Activated CD4-positive, alpha-beta memory T cell treated with anti-CD3 and anti-CD28 coated beads for 36 hours (primary cell): ENCODE measurements at regions of chr11 and their contacts with region 1.

Region 1: DNA sequence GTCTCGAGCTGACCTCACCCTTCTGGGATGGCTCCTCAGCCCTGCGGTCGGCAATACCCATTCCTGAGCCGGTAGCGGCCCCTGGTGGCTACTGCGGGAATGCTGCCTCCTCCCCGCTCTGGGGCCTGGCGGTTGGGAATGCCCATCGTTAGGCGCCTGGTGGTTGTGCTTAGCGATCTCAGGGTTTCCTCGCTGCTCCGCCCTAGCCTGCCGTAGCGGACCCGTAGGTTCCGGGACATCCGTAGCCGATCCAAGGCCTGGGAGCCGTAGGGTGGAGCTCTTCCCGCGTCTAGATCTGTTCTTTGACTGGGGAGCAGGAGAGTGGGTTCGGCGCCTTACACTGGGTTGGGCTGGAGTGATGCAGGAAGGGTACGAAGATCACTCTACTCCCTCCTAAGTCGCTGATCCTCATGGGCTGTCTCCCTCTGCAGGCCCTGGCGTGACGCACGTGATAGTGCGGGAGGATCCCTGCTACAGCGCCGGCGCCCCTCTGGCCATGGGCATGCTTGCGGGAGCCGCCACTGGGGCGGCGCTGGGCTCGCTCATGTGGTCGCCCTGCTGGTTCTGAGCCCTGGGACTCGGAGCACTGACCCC is 14.8 kb downstream of the PLEKHB1 start:
- DNase-seq: peak; percentile 90
- H3K4me3 Mint-ChIP-seq: peak overlapping the region; percentile 37
- H3K27ac Mint-ChIP-seq: no peak overlapping the region
- H3K4me1 Mint-ChIP-seq: peaks cover 3% of the 10 kb centered on the region
- H3K27me3 Mint-ChIP-seq: no peaks in the 10 kb centered on the region

Region 2: DNA sequence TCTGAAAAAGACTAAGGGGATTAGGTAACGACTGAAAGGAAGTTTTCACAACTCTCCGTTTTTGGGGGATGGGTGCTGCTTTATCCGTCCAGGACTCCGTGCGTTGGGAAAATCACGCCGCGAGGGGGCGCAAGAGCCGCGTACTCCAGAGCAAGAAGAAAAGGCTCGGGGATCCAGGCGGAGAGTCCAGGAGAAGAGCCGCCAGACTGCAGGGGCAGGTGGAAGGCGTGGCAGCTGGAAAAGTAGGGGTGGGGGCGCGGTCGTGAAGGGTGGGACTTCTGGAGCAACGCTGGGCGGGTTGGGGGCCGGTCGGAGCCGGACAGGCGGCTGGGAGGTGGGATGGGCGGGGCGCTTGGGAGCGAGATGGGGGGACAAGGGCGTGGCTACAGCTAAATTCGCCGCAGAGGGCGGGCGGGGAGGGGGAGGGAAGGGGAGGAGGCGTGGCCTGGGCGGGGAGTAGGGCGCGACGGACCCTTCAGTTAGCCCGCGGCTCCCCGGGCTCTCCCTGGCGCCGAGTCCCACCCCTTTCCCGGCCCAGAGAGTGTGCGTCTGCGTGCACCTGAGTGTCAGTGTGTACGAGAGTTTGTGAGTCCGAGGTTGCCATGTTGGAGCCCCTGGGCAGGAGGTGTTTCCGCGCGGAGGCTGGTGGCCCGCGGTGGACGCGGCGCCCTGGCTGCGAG is 353.7 kb before region 1 on chr11:
- CTCF ChIA-PET with region 1: interaction called, 19 read pairs
- POLR2A ChIA-PET with region 1: no interaction called
- intact Hi-C with region 1: no loop called
- DNase-seq: peak; percentile 93
- H3K4me3 Mint-ChIP-seq: peak overlapping the region; percentile 74
- H3K27ac Mint-ChIP-seq: no peak overlapping the region
- H3K4me1 Mint-ChIP-seq: peaks cover 6% of the 10 kb centered on the region
- H3K27me3 Mint-ChIP-seq: peaks cover 8% of the 10 kb centered on the region

Region 3: DNA sequence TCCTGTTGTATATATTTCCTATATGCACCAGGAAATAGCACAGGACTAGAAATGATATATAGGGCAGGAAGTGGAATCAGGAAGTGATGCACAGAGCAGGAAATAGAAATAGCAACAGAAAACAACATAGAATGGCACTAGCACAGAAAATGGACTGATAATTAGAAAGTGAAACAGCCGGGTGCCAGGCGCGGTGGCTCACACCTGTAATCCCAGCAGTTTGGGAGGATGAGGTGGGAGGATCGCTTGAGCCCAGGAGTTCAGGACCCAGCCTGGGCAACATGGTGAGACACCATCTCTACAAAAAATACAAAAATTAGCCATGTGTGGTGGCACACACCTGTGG is 294.9 kb before region 1 on chr11:
- CTCF ChIA-PET with region 1: no interaction called
- POLR2A ChIA-PET with region 1: no interaction called
- intact Hi-C with region 1: no loop called
- DNase-seq: peak; percentile 37
- H3K4me3 Mint-ChIP-seq: peak overlapping the region; percentile 13
- H3K27ac Mint-ChIP-seq: peak overlapping the region; percentile 34
- H3K4me1 Mint-ChIP-seq: peaks cover 22% of the 10 kb centered on the region
- H3K27me3 Mint-ChIP-seq: no peaks in the 10 kb centered on the region

Region 4: DNA sequence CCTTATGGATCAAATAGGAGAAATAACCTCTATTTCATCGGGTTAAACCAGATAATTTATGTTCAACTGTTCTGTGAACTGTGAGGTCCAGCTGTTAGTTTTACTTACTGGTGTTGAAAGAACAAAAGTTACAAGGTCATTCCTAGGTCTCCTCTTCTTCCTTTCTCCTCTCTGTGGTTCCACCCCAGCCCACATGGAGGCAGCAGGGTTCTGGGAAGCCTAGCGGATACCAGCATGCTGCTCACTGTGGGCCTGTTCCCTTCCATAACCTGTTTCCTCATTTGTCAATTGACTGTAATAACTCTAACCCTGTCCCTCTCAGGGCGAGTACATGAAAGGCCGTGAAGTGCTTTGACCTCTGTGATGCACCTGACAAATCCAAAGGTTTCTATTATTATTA is 257.1 kb before region 1 on chr11:
- CTCF ChIA-PET with region 1: interaction called, 11 read pairs
- POLR2A ChIA-PET with region 1: no interaction called
- intact Hi-C with region 1: no loop called
- DNase-seq: peak; percentile 34
- H3K4me3 Mint-ChIP-seq: no peak overlapping the region
- H3K27ac Mint-ChIP-seq: no peak overlapping the region
- H3K4me1 Mint-ChIP-seq: no peaks in the 10 kb centered on the region
- H3K27me3 Mint-ChIP-seq: no peaks in the 10 kb centered on the region

Region 5: DNA sequence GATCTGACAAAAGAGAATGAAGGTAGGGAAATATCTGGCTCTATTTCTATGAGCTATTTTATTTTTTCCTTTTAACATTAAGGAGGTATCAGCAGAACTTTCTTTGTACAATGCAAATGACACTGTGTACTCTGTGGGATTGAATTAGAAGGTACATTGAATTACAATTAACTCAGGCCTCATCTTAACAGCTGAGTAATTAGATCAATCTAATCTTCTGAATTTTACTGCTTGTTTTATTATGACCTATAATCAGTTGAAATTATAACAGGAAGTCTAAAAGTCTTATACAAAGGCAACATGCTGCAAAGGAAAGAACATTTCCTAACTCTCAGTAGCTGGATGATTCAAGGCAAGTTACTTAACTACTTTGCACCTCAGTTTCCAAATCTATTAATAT is 215.2 kb before region 1 on chr11:
- CTCF ChIA-PET with region 1: no interaction called
- POLR2A ChIA-PET with region 1: no interaction called
- intact Hi-C with region 1: no loop called
- DNase-seq: no peak
- H3K4me3 Mint-ChIP-seq: no peak overlapping the region
- H3K27ac Mint-ChIP-seq: no peak overlapping the region
- H3K4me1 Mint-ChIP-seq: peaks cover 6% of the 10 kb centered on the region
- H3K27me3 Mint-ChIP-seq: no peaks in the 10 kb centered on the region

Region 6: DNA sequence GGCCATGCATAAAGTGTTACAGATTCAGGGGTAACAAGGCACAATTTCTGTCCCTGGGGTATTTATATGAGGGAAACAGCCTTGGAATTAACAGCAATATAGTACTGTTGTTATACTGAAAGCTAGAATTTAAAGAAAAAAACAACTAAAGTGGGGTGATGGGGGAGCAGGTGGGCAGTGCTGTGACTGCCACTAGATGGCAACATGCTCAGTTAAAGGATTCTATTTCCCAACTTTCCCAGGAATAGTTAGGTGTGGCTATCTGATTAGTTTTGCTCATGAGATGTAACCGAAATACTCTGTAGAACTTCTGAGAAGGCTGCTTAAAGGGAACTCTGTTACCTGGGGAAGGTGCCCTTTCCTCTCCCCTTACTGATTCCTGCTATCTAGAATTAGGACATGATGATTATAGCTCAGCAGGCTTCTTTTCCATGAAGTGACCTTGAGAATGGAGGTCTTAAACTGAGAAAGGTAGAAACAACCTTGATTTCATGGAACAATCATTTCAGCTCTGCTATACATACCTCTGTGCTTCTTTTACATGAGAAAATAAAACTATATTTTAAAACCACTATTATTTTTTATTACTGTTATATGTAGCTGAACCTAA is 182.3 kb before region 1 on chr11:
- CTCF ChIA-PET with region 1: interaction called, 15 read pairs
- POLR2A ChIA-PET with region 1: no interaction called
- intact Hi-C with region 1: no loop called
- DNase-seq: no peak
- H3K4me3 Mint-ChIP-seq: no peak overlapping the region
- H3K27ac Mint-ChIP-seq: no peak overlapping the region
- H3K4me1 Mint-ChIP-seq: no peaks in the 10 kb centered on the region
- H3K27me3 Mint-ChIP-seq: no peaks in the 10 kb centered on the region

Region 7: DNA sequence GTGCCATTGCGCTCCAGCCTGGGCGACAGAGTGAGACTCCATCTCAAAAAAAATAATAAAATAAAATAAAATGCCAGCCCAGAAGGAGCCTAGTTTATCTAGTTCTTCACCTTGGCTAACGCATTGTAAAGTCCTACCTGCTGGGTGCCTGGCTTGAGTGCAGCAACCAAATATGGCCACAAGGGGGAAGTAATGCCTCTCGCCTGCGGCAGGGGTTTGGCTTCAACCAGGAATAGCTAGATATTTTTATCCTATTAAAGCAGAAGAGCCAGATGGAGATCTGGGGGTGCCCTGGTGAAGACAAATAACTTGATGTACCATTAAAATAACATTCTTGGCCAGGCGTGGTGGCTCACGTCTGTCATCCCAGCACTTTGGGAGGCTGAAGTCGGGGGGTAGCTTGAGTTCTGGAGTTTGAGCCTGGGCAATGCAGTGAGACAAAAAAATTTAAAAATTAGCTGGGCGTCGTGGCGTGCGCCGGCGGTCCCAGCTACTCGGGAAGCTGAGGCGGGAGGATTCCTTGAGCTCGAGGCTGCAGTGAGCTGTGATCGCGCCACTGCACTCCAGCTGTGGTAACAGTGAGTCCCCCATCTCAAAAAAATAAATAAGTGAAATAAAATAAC is 35.3 kb before region 1 on chr11:
- CTCF ChIA-PET with region 1: interaction called, 173 read pairs
- POLR2A ChIA-PET with region 1: no interaction called
- intact Hi-C with region 1: loop called (anchors 1 kb)
- DNase-seq: peak; percentile 75
- H3K4me3 Mint-ChIP-seq: no peak overlapping the region
- H3K27ac Mint-ChIP-seq: no peak overlapping the region
- H3K4me1 Mint-ChIP-seq: no peaks in the 10 kb centered on the region
- H3K27me3 Mint-ChIP-seq: peaks cover 14% of the 10 kb centered on the region

Region 8: GRCh38 chr11:73647459-73648100 is 13.6 kb before region 1 on chr11:
- CTCF ChIA-PET with region 1: interaction called, 14 read pairs
- POLR2A ChIA-PET with region 1: no interaction called
- intact Hi-C with region 1: no loop called
- DNase-seq: peak; percentile 95
- H3K4me3 Mint-ChIP-seq: peak overlapping the region; percentile 79
- H3K27ac Mint-ChIP-seq: peak overlapping the region; percentile 23
- H3K4me1 Mint-ChIP-seq: peaks cover 7% of the 10 kb centered on the region
- H3K27me3 Mint-ChIP-seq: no peaks in the 10 kb centered on the region

Region 9: DNA sequence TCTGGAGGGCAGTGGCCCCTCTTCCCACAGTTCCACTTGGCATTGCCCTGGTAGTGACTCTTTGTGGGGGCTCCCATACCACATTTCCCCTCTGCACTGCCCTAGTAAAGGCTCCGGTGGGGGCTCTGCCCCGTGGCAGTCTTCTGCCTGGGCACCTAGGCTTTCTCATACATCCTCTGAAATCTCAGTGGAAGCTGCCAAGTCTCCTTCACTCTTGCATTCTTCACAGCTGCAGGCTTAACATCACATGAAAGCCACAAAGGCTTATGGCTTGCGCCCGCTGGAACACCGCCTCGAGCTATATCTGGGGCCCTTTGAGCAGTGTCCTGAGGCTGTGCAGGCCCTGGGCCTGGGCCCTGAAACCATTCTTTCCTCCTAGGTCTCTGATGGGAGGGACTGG is 10.6 kb after region 1 on chr11:
- CTCF ChIA-PET with region 1: interaction called, 25 read pairs
- POLR2A ChIA-PET with region 1: no interaction called
- intact Hi-C with region 1: no loop called
- DNase-seq: no peak
- H3K4me3 Mint-ChIP-seq: no peak overlapping the region
- H3K27ac Mint-ChIP-seq: no peak overlapping the region
- H3K4me1 Mint-ChIP-seq: no peaks in the 10 kb centered on the region
- H3K27me3 Mint-ChIP-seq: no peaks in the 10 kb centered on the region